Activated CD4-positive, alpha-beta T cell treated with anti-CD3 and anti-CD28 coated beads, Interleukin-2, amount 10 ng/mL, durations not matched to agents 24 days and 14 days (primary cell): ENCODE measurements at regions of chr15 and their contacts with region 1.

Region 1: DNA sequence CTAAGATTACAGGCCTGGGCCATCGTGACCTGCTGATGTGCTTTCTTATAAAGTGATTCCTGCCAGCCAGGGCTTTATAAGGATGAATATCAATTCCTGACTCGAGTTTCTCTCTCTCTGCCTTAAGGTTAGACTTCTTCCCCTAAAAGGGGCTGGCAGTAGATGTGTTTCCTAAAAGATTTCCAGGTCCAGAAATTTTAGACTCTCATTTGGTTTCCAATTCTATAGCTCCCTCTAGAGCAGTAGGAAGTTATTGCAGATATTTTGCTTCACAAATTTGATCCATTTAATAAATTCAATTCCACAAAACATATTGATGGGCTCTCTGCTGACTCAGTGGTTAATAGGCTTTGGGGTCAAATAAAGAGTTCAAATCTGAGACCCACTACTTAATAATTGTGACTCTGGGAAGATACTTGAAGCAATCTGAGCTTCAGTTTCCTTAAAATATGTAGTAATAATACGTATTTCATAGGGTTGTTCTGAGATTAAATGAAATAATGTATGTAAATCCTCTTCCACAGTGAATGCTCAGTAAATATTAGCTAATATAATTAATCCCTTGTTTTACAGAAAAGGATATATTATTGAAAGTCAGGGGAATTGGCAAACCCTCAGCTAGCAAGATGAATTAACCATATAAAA is 2.1 kb downstream of the TRIM69 start:
- DNase-seq: peak; percentile 71
- H3K4me3 Mint-ChIP-seq: peak overlapping the region; percentile 66
- H3K27ac Mint-ChIP-seq: peak overlapping the region; percentile 37
- H3K4me1 Mint-ChIP-seq: peaks cover 42% of the 10 kb centered on the region
- H3K27me3 Mint-ChIP-seq: no peaks in the 10 kb centered on the region

Region 2: DNA sequence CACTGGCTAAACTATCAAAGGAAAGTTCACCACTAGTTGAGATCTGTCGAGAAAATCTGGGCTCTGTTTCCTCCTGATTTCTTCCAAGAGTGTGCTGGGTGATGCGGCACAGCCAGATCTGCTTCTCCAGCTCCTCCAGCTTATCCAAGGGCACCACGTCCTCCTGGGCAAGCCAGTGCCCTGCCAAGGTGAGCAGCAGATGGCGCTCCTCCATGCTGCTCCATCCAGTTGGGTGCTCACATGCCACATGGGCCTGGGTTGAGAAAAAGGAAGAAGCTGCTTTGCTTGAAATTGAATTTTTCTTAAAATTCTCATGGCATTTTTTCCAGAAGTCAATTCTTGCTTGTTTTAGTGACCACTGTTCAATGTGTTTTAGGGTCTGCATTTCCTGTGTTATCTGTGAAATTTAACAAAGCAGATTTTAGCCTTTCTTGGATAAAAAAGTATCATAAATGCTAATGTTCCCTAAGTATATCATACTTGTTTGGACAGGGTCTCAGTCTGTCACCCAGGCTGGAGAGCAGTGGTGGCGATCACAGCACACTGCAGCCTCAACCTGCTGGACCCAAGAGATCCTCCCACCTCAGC is 154.2 kb before region 1 on chr15:
- intact Hi-C with region 1: loop called (anchors 1 kb)
- DNase-seq: peak; percentile 84
- H3K4me3 Mint-ChIP-seq: no peak overlapping the region
- H3K27ac Mint-ChIP-seq: no peak overlapping the region
- H3K4me1 Mint-ChIP-seq: peaks cover 3% of the 10 kb centered on the region
- H3K27me3 Mint-ChIP-seq: no peaks in the 10 kb centered on the region

Region 3: GRCh38 chr15:44593042-44593736 is 145.3 kb before region 1 on chr15:
- intact Hi-C with region 1: loop called (anchors 1 kb)
- DNase-seq: peak; percentile 73
- H3K4me3 Mint-ChIP-seq: no peak overlapping the region
- H3K27ac Mint-ChIP-seq: peak overlapping the region; percentile 41
- H3K4me1 Mint-ChIP-seq: peaks cover 23% of the 10 kb centered on the region
- H3K27me3 Mint-ChIP-seq: no peaks in the 10 kb centered on the region